GM12878 (cell line): ENCODE measurements at regions of chr13 and their contacts with region 1.

Region 1: GRCh38 chr13:46553886-46554858 is 1.2 kb downstream of the LRCH1 start:
- DNase-seq: no peak
- ATAC-seq: peak; percentile 78
- H3K4me3 ChIP-seq: peak overlapping the region; percentile 70
- H3K27ac ChIP-seq: peak overlapping the region; percentile 86
- H3K4me1 ChIP-seq: peaks cover 11% of the 10 kb centered on the region
- H3K27me3 ChIP-seq: no peaks in the 10 kb centered on the region
- CTCF ChIP-seq: peak in 2 of 3 experiments; percentile 20 to 52; a peak in 3 of 6 replicates
- EP300 ChIP-seq: peak in 1 of 2 experiments; percentile 30; a peak in 1 of 4 replicates
- POLR2A ChIP-seq: peak; percentile 90
- RAD21 ChIP-seq: no peak

Region 2: GRCh38 chr13:46176756-46177155 is 377.4 kb before region 1 on chr13:
- CTCF ChIA-PET with region 1: no interaction called
- POLR2A ChIA-PET with region 1: no interaction called
- RAD21 ChIA-PET with region 1: no interaction called
- SMC1A ChIA-PET with region 1: no interaction called
- in situ Hi-C with region 1: loop called (anchors 10 kb)
- intact Hi-C with region 1: no loop called
- DNase-seq: peak; percentile 79
- ATAC-seq: peak; percentile 35
- H3K4me3 ChIP-seq: peak overlapping the region; percentile 72
- H3K27ac ChIP-seq: peak overlapping the region; percentile 99
- H3K4me1 ChIP-seq: peaks cover 15% of the 10 kb centered on the region
- H3K27me3 ChIP-seq: no peaks in the 10 kb centered on the region
- CTCF ChIP-seq: no peak
- EP300 ChIP-seq: peak; percentile 48 to 52; a peak in 1 of 4 replicates
- POLR2A ChIP-seq: no peak
- RAD21 ChIP-seq: no peak

Region 3: DNA sequence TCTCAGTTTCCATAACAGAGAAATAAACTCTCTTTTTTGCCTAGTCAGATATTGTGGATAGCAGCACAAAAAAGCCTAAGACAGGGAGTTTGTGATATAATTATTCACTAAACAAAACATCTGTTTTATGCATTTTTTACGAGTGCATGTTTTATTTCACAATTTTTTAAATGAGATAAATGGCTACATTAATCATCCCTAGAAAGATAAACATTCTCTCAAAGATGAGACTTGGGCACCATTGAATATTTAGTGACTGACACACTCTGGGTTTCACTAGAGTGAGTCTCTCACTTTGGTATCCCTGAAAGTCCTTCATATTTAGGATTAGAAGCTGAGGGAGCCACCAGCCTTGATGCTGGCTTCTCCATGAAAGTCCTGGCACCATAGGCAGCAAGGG is 75.5 kb before region 1 on chr13:
- CTCF ChIA-PET with region 1: no interaction called
- POLR2A ChIA-PET with region 1: no interaction called
- RAD21 ChIA-PET with region 1: no interaction called
- SMC1A ChIA-PET with region 1: no interaction called
- in situ Hi-C with region 1: no loop called
- intact Hi-C with region 1: no loop called
- DNase-seq: no peak
- ATAC-seq: no peak
- H3K4me3 ChIP-seq: no peak overlapping the region
- H3K27ac ChIP-seq: no peak overlapping the region
- H3K4me1 ChIP-seq: no peaks in the 10 kb centered on the region
- H3K27me3 ChIP-seq: no peaks in the 10 kb centered on the region
- CTCF ChIP-seq: no peak
- EP300 ChIP-seq: no peak
- POLR2A ChIP-seq: no peak
- RAD21 ChIP-seq: no peak

Region 4: GRCh38 chr13:46577696-46578589 is 23.8 kb after region 1 on chr13:
- CTCF ChIA-PET with region 1: interaction called, 39 read pairs
- POLR2A ChIA-PET with region 1: interaction called, 24 read pairs
- RAD21 ChIA-PET with region 1: interaction called, 73 read pairs
- SMC1A ChIA-PET with region 1: interaction called, 124 read pairs
- in situ Hi-C with region 1: no loop called
- intact Hi-C with region 1: loop called (anchors 2 kb)
- DNase-seq: no peak
- ATAC-seq: peak; percentile 46
- H3K4me3 ChIP-seq: peak overlapping the region; percentile 71
- H3K27ac ChIP-seq: peak overlapping the region; percentile 83
- H3K4me1 ChIP-seq: peaks cover 76% of the 10 kb centered on the region
- H3K27me3 ChIP-seq: no peaks in the 10 kb centered on the region
- CTCF ChIP-seq: no peak
- EP300 ChIP-seq: no peak
- POLR2A ChIP-seq: no peak
- RAD21 ChIP-seq: no peak

Region 5: DNA sequence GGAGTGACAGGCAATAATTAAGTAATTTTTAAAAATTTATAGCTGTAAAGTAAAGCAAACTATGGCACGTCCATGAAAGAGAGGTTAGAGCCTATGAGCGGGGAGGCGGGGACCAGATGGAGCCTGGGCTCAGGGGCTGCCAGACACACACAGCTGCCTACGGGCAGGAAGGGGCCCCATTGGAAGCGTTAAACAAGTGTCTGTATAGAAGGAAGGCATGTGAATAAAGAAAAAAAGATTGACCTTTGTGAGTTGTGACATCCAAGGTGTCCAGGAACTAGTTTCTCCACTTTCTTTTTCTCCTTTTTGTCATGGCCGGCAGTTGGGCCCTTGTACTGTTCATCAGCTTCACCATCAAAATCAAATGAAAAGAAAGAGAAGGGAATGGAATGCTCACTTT is 55.6 kb after region 1 on chr13:
- CTCF ChIA-PET with region 1: interaction called, 41 read pairs
- POLR2A ChIA-PET with region 1: no interaction called
- RAD21 ChIA-PET with region 1: interaction called, 15 read pairs
- SMC1A ChIA-PET with region 1: interaction called, 17 read pairs
- in situ Hi-C with region 1: no loop called
- intact Hi-C with region 1: no loop called
- DNase-seq: no peak
- ATAC-seq: no peak
- H3K4me3 ChIP-seq: no peak overlapping the region
- H3K27ac ChIP-seq: no peak overlapping the region
- H3K4me1 ChIP-seq: peaks cover 40% of the 10 kb centered on the region
- H3K27me3 ChIP-seq: no peaks in the 10 kb centered on the region
- CTCF ChIP-seq: no peak
- EP300 ChIP-seq: no peak
- POLR2A ChIP-seq: no peak
- RAD21 ChIP-seq: no peak

Region 6: GRCh38 chr13:46648166-46648635 is 94.0 kb after region 1 on chr13:
- CTCF ChIA-PET with region 1: interaction called, 5 read pairs
- POLR2A ChIA-PET with region 1: interaction called, 4 read pairs
- RAD21 ChIA-PET with region 1: interaction called, 11 read pairs
- SMC1A ChIA-PET with region 1: interaction called, 17 read pairs
- in situ Hi-C with region 1: no loop called
- intact Hi-C with region 1: no loop called
- DNase-seq: no peak
- ATAC-seq: peak; percentile 95
- H3K4me3 ChIP-seq: no peak overlapping the region
- H3K27ac ChIP-seq: no peak overlapping the region
- H3K4me1 ChIP-seq: peaks cover 34% of the 10 kb centered on the region
- H3K27me3 ChIP-seq: no peaks in the 10 kb centered on the region
- CTCF ChIP-seq: no peak
- EP300 ChIP-seq: no peak
- POLR2A ChIP-seq: no peak
- RAD21 ChIP-seq: no peak

Region 7: GRCh38 chr13:46679369-46680120 is 125.4 kb after region 1 on chr13:
- CTCF ChIA-PET with region 1: interaction called, 64 read pairs
- POLR2A ChIA-PET with region 1: interaction called, 5 read pairs
- RAD21 ChIA-PET with region 1: interaction called, 52 read pairs
- SMC1A ChIA-PET with region 1: interaction called, 28 read pairs
- in situ Hi-C with region 1: no loop called
- intact Hi-C with region 1: loop called (anchors 2 kb)
- DNase-seq: peak; percentile 53
- ATAC-seq: peak; percentile 91
- H3K4me3 ChIP-seq: peak overlapping the region; percentile 56
- H3K27ac ChIP-seq: peak overlapping the region; percentile 83
- H3K4me1 ChIP-seq: peaks cover 37% of the 10 kb centered on the region
- H3K27me3 ChIP-seq: no peaks in the 10 kb centered on the region
- CTCF ChIP-seq: peak; percentile 13 to 44 (median 25); a peak in 4 of 6 replicates
- EP300 ChIP-seq: no peak
- POLR2A ChIP-seq: no peak; the same call in none of the 2 replicates
- RAD21 ChIP-seq: peak; percentile 55

Region 8: DNA sequence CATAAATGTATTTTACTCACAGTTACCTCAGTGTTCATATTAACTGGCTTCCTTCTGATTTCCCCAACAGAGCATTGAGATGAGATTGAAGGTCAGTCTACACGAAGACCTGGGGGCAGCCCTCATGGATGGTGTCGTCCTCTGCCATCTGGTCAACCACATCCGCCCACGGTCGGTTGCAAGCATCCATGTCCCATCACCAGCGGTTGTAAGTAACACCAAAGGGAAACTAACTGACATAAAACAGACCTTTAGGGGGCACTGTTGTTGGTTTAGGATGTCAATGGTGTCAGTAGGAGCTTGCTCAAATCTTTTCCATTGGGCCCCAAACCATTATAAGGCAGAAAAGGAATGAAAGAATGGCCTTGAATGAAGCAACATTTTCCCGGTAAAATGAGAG is 174.6 kb after region 1 on chr13:
- CTCF ChIA-PET with region 1: interaction called, 92 read pairs
- POLR2A ChIA-PET with region 1: no interaction called
- RAD21 ChIA-PET with region 1: interaction called, 4 read pairs
- SMC1A ChIA-PET with region 1: interaction called, 80 read pairs
- in situ Hi-C with region 1: loop called (anchors 5 kb)
- intact Hi-C with region 1: no loop called
- DNase-seq: no peak
- ATAC-seq: peak; percentile 74
- H3K4me3 ChIP-seq: no peak overlapping the region
- H3K27ac ChIP-seq: no peak overlapping the region
- H3K4me1 ChIP-seq: no peaks in the 10 kb centered on the region
- H3K27me3 ChIP-seq: no peaks in the 10 kb centered on the region
- CTCF ChIP-seq: peak in 2 of 3 experiments; percentile 11 to 33; a peak in 3 of 6 replicates
- EP300 ChIP-seq: no peak
- POLR2A ChIP-seq: no peak
- RAD21 ChIP-seq: no peak